ENCODE measurements at regions of chr12 and their contacts with region 1.

Region 1: GRCh38 chr12:113196996-113197395 is 11.5 kb downstream of the RITA1 start:
- DNase-seq: peak in 8 of 9 donors; percentile 42 to 69 (median 57)
- ATAC-seq: peak; percentile 99
- H3K4me3 ChIP-seq: no peak overlapping the region
- H3K4me3 Mint-ChIP-seq: no peak overlapping the region
- H3K27ac ChIP-seq: no peak overlapping the region
- H3K27ac Mint-ChIP-seq: peak overlapping the region in 1 of 9 donors; percentile 13
- H3K4me1 ChIP-seq: no peaks in the 10 kb centered on the region
- H3K4me1 Mint-ChIP-seq: peaks cover 0 to 16% (median 4%) of the 10 kb centered on the region in 7 donors
- H3K27me3 ChIP-seq: no peaks in the 10 kb centered on the region
- H3K27me3 Mint-ChIP-seq: no peaks in the 10 kb centered on the region

Region 2: GRCh38 chr12:112961074-112961473 is 235.9 kb before region 1 on chr12:
- CTCF ChIA-PET with region 1: no interaction called
- POLR2A ChIA-PET with region 1: no interaction called
- intact Hi-C with region 1: no loop called
- DNase-seq: no peak
- ATAC-seq: no peak
- H3K4me3 ChIP-seq: no peak overlapping the region
- H3K4me3 Mint-ChIP-seq: no peak overlapping the region
- H3K27ac ChIP-seq: no peak overlapping the region
- H3K27ac Mint-ChIP-seq: peak overlapping the region in 1 of 9 donors; percentile 25
- H3K4me1 ChIP-seq: no peaks in the 10 kb centered on the region
- H3K4me1 Mint-ChIP-seq: peaks cover 12 to 39% (median 21%) of the 10 kb centered on the region in 7 donors
- H3K27me3 ChIP-seq: no peaks in the 10 kb centered on the region
- H3K27me3 Mint-ChIP-seq: no peaks in the 10 kb centered on the region

Region 3: GRCh38 chr12:113208041-113208934 is 11.3 kb after region 1 on chr12:
- CTCF ChIA-PET with region 1: no interaction called
- POLR2A ChIA-PET with region 1: interaction called, 3 read pairs
- intact Hi-C with region 1: loop called in 1 of 2 experiments (anchors 1 kb)
- DNase-seq: peak; percentile 18 to 72 (median 62)
- ATAC-seq: peak; percentile 89
- H3K4me3 ChIP-seq: no peak overlapping the region
- H3K4me3 Mint-ChIP-seq: peak overlapping the region; percentile 59 to 86 (median 77)
- H3K27ac ChIP-seq: peak overlapping the region; percentile 64
- H3K27ac Mint-ChIP-seq: peak overlapping the region; percentile 82 to 97 (median 90)
- H3K4me1 ChIP-seq: peaks cover 38 to 45% of the 10 kb centered on the region in 2 donors
- H3K4me1 Mint-ChIP-seq: peaks cover 28 to 62% (median 51%) of the 10 kb centered on the region in 7 donors
- H3K27me3 ChIP-seq: no peaks in the 10 kb centered on the region
- H3K27me3 Mint-ChIP-seq: no peaks in the 10 kb centered on the region

Region 4: DNA sequence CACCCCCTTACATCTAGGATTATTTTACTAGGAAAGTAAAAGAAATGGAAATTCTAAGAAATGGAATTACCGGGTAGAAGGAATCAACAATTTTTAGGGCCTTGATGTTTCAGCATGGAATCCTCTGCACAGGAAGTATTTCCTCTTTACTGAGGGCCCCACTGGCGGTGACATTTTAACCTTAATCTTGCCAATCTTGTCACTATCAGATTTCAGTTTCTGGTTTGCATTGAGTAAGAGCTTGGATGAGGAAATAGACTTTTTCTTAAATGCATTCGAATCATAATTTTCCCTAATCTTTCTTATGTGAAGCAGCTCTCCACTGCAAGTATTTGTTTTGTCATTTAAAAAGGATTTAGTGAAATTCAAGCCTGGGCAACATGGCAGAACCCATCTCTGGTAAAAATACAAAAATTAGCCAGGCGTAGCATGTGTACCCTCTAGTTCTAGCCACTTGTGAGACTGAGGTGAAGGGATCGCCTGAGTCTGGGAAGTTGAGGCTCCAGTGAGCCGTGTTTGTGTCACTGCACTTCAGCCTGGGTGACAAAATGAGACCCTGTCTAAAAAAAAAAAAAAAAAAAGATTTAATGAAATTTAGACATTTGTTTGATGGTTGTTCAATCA is 65.0 kb after region 1 on chr12:
- CTCF ChIA-PET with region 1: no interaction called
- POLR2A ChIA-PET with region 1: no interaction called
- intact Hi-C with region 1: loop called in 1 of 2 experiments (anchors 1 kb)
- DNase-seq: peak in 8 of 9 donors; percentile 25 to 63 (median 52)
- ATAC-seq: peak; percentile 72
- H3K4me3 ChIP-seq: peak overlapping the region; percentile 37
- H3K4me3 Mint-ChIP-seq: peak overlapping the region; percentile 55 to 88 (median 76)
- H3K27ac ChIP-seq: peak overlapping the region; percentile 58
- H3K27ac Mint-ChIP-seq: peak overlapping the region; percentile 77 to 95 (median 91)
- H3K4me1 ChIP-seq: peaks cover 14 to 53% of the 10 kb centered on the region in 2 donors
- H3K4me1 Mint-ChIP-seq: peaks cover 27 to 76% (median 55%) of the 10 kb centered on the region in 7 donors
- H3K27me3 ChIP-seq: no peaks in the 10 kb centered on the region
- H3K27me3 Mint-ChIP-seq: no peaks in the 10 kb centered on the region

Region 5: GRCh38 chr12:113310489-113310888 is 113.5 kb after region 1 on chr12:
- CTCF ChIA-PET with region 1: no interaction called
- POLR2A ChIA-PET with region 1: no interaction called
- intact Hi-C with region 1: loop called in 1 of 2 experiments (anchors 5 kb)
- DNase-seq: no peak
- ATAC-seq: no peak
- H3K4me3 ChIP-seq: no peak overlapping the region
- H3K4me3 Mint-ChIP-seq: no peak overlapping the region
- H3K27ac ChIP-seq: no peak overlapping the region
- H3K27ac Mint-ChIP-seq: peak overlapping the region in 3 of 9 donors; percentile 36 to 59 (median 43)
- H3K4me1 ChIP-seq: no peaks in the 10 kb centered on the region
- H3K4me1 Mint-ChIP-seq: peaks cover 0 to 4% (median 0%) of the 10 kb centered on the region in 7 donors
- H3K27me3 ChIP-seq: no peaks in the 10 kb centered on the region
- H3K27me3 Mint-ChIP-seq: no peaks in the 10 kb centered on the region

Region 6: GRCh38 chr12:113912760-113913329 is 715.8 kb after region 1 on chr12:
- CTCF ChIA-PET with region 1: interaction called, 3 read pairs
- POLR2A ChIA-PET with region 1: no interaction called
- intact Hi-C with region 1: loop called in 1 of 2 experiments (anchors 5 kb)
- DNase-seq: peak in 6 of 9 donors; percentile 7 to 51 (median 24)
- ATAC-seq: peak; percentile 47
- H3K4me3 ChIP-seq: no peak overlapping the region
- H3K4me3 Mint-ChIP-seq: no peak overlapping the region
- H3K27ac ChIP-seq: no peak overlapping the region
- H3K27ac Mint-ChIP-seq: peak overlapping the region in 1 of 9 donors; percentile 30
- H3K4me1 ChIP-seq: no peaks in the 10 kb centered on the region
- H3K4me1 Mint-ChIP-seq: peaks cover 0 to 4% (median 0%) of the 10 kb centered on the region in 7 donors
- H3K27me3 ChIP-seq: no peaks in the 10 kb centered on the region
- H3K27me3 Mint-ChIP-seq: no peaks in the 10 kb centered on the region

Measured in naive thymus-derived CD4-positive, alpha-beta T cell (primary cell).